SK-N-SH (cell line): ENCODE measurements at regions of chr11 and their contacts with region 1.

Region 1: GRCh38 chr11:2885676-2886081 is at the start of gene CDKN1C:
- DNase-seq: peak; percentile 98
- H3K4me3 ChIP-seq: peak within 1 kb of the TSS; percentile 58 to 65
- H3K27ac ChIP-seq: peak within 1 kb of the TSS in 1 of 2 experiments; percentile 83; a peak in 1 of 4 replicates
- H3K4me1 ChIP-seq: peaks cover 3 to 36% of the 10 kb centered on the region in 2 experiments; a peak in 1 of 4 replicates
- H3K27me3 ChIP-seq: no peaks in the 10 kb centered on the region
- CTCF ChIP-seq: no peak
- EP300 ChIP-seq: no peak
- RAD21 ChIP-seq: no peak
- polyA plus RNA-seq, gene CDKN1C: 1.1 and 1.6 TPM in 2 replicates

Region 2: DNA sequence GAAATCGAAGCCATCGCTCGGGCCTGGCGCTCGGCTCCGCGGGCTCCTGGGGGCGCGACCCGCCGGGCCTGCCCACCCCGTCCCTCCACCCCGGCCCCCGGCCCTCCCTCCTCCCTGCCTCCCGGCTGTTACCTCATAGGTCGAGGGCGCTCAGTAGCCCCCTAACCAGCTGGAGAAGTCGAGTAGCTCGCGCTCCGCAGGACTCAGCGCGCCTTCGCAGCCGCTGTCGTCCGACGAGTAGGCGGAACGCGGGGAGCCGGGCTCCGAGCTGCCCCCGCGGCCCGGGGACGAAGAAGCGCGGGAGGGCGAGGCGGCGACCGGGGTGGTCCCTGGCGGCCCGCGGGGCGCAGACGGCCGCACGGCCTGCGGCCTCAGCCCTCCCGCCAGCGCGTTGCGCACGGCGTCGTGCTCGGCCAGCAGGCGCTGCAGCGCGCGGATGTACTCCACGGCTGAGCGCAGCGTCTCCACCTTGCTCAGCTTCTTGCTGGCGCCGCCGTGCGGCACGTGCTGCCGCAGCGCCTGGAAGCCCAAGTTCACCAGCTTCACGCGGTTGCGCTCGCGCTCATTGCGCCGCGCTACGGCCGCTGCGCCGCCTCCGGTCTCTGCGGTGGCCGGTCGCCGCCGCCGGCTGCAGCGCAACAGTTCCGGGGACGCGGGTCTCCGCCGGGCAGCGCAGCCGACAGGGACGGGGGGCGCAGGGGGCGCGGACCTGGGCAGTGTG is 615.9 kb before region 1 on chr11:
- CTCF ChIA-PET with region 1: no interaction called
- POLR2A ChIA-PET with region 1: no interaction called
- DNase-seq: peak; percentile 82
- H3K4me3 ChIP-seq: no peak overlapping the region
- H3K27ac ChIP-seq: no peak overlapping the region
- H3K4me1 ChIP-seq: no peaks in the 10 kb centered on the region
- H3K27me3 ChIP-seq: peaks cover 29% of the 10 kb centered on the region
- CTCF ChIP-seq: no peak
- EP300 ChIP-seq: no peak
- RAD21 ChIP-seq: peak; percentile 13; the same call in 1 of the 2 replicates

Region 3: DNA sequence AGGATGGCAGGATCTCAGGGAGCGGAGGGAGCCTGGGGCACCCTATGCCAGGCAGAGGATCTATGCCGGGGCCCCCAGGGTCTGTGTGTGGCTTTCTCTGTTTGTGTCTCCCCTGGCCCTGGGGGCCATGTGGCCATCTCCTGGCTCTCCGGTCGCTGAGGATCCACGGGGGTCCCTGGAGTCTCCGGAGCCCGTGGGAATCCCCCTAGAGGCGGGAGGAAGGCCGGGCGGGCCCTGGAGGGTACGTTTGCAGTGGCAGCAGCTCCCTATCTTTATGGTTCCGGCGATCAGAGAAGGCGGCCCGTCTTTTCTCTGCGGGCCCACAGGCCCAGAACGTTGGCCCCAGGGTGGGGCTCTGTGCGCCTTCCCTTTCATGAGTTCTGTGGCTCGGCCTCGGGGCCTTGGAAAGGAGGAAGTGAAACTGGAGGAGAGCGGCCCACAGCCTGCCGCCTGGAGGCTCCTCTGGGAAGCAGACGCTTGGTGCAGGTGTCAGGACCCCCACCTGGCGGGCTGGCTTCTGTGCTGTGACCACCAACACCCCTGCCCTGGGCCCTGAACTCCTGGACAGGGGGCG is 358.8 kb before region 1 on chr11:
- CTCF ChIA-PET with region 1: interaction called, 1,016 read pairs
- POLR2A ChIA-PET with region 1: interaction called, 14 read pairs
- DNase-seq: no peak
- H3K4me3 ChIP-seq: no peak overlapping the region
- H3K27ac ChIP-seq: no peak overlapping the region
- H3K4me1 ChIP-seq: peaks cover 0 to 5% of the 10 kb centered on the region in 2 experiments; a peak in 1 of 4 replicates
- H3K27me3 ChIP-seq: no peaks in the 10 kb centered on the region
- CTCF ChIP-seq: no peak
- EP300 ChIP-seq: no peak
- RAD21 ChIP-seq: no peak

Region 4: DNA sequence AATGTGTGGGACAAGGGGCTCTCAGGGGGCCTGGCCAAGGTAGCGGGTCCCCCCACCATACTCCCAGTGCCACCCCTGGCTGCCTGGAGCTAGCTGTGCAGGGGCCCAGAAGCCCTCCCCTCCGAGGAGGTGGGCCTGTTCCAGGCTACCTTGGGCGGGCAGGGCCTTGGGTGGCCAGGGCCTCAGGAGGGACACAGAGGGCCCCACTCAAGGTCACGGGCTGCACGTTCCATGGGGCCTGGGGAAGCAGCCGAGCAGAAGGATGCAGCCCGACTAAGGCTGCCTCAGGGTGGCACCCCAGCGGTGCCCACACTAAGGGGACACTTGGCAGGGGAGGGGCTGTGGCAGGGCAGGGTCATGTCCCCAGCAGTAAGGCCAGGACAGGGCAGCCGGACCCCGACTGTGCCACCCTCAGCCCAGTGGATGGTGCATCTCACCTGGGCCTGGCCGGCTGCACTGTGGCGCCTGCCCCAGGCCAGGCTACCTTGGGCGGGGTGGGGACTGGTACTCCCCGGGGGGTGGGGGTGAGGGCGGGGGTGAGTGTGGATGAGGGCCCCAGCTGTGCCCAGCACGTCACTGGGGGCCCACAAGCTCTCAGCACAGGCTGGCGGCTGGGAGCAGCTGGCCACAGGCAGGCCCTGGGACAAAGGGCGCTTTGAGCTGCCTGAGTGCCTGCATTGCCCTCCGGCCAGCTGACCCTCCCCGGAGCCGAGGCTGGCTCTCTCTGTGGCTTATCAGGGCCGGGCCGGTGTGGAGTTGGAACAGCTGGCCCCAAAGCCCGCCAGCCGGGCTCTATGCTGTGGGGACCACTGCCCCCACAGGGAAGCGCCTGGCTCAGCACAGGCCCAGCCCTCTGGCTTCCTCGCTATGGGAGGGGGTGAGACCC is 323.7 kb before region 1 on chr11:
- CTCF ChIA-PET with region 1: interaction called, 11 read pairs
- POLR2A ChIA-PET with region 1: no interaction called
- DNase-seq: no peak
- H3K4me3 ChIP-seq: no peak overlapping the region
- H3K27ac ChIP-seq: no peak overlapping the region
- H3K4me1 ChIP-seq: no peaks in the 10 kb centered on the region; a peak in 1 of 4 replicates
- H3K27me3 ChIP-seq: no peaks in the 10 kb centered on the region
- CTCF ChIP-seq: no peak
- EP300 ChIP-seq: no peak
- RAD21 ChIP-seq: no peak

Region 5: GRCh38 chr11:2684581-2684980 is 201.1 kb before region 1 on chr11:
- CTCF ChIA-PET with region 1: interaction called, 11 read pairs
- POLR2A ChIA-PET with region 1: no interaction called
- DNase-seq: no peak
- H3K4me3 ChIP-seq: no peak overlapping the region
- H3K27ac ChIP-seq: no peak overlapping the region
- H3K4me1 ChIP-seq: peaks cover 0 to 28% of the 10 kb centered on the region in 2 experiments; a peak in 1 of 4 replicates
- H3K27me3 ChIP-seq: no peaks in the 10 kb centered on the region
- CTCF ChIP-seq: no peak
- EP300 ChIP-seq: no peak
- RAD21 ChIP-seq: no peak

Region 6: GRCh38 chr11:2699531-2700414 is 185.9 kb before region 1 on chr11 and contains the start of gene KCNQ1OT1:
- CTCF ChIA-PET with region 1: interaction called, 10 read pairs
- POLR2A ChIA-PET with region 1: interaction called, 5 read pairs
- DNase-seq: peak; percentile 94
- H3K4me3 ChIP-seq: peak within 1 kb of the TSS; percentile 67 to 70
- H3K27ac ChIP-seq: peak within 1 kb of the TSS; percentile 60 to 87
- H3K4me1 ChIP-seq: peaks cover 0 to 29% of the 10 kb centered on the region in 2 experiments; a peak in 1 of 4 replicates
- H3K27me3 ChIP-seq: no peaks in the 10 kb centered on the region
- CTCF ChIP-seq: 0 out of 2 replicates have a peak, but pooled peaks have one; percentile 9
- EP300 ChIP-seq: no peak
- RAD21 ChIP-seq: no peak
- polyA plus RNA-seq, gene KCNQ1OT1: 0.03 and 0.05 TPM in 2 replicates

Region 7: GRCh38 chr11:2725368-2726300 is 160.0 kb before region 1 on chr11:
- CTCF ChIA-PET with region 1: interaction called, 10 read pairs
- POLR2A ChIA-PET with region 1: interaction called, 3 read pairs
- DNase-seq: no peak
- H3K4me3 ChIP-seq: no peak overlapping the region
- H3K27ac ChIP-seq: no peak overlapping the region
- H3K4me1 ChIP-seq: peaks cover 0 to 34% of the 10 kb centered on the region in 2 experiments; a peak in 1 of 4 replicates
- H3K27me3 ChIP-seq: no peaks in the 10 kb centered on the region
- CTCF ChIP-seq: no peak
- EP300 ChIP-seq: no peak
- RAD21 ChIP-seq: no peak

Region 8: GRCh38 chr11:2901854-2902783 is 16.4 kb after region 1 on chr11:
- CTCF ChIA-PET with region 1: interaction called, 66 read pairs
- POLR2A ChIA-PET with region 1: interaction called, 3 read pairs
- DNase-seq: peak; percentile 98
- H3K4me3 ChIP-seq: peak overlapping the region; percentile 78 to 80
- H3K27ac ChIP-seq: peak overlapping the region; percentile 35 to 58; a peak in 2 of 4 replicates
- H3K4me1 ChIP-seq: peaks cover 17 to 21% of the 10 kb centered on the region in 2 experiments; a peak in 3 of 4 replicates
- H3K27me3 ChIP-seq: no peaks in the 10 kb centered on the region
- CTCF ChIP-seq: no peak
- EP300 ChIP-seq: no peak; a peak in 1 of 4 replicates
- RAD21 ChIP-seq: no peak

Region 9: GRCh38 chr11:2992234-2992996 is 106.7 kb after region 1 on chr11 and contains the start of gene NAP1L4:
- CTCF ChIA-PET with region 1: no interaction called
- POLR2A ChIA-PET with region 1: no interaction called
- DNase-seq: peak; percentile 99
- H3K4me3 ChIP-seq: peak within 1 kb of the TSS; percentile 89 to 97
- H3K27ac ChIP-seq: peak within 1 kb of the TSS; percentile 81 to 82
- H3K4me1 ChIP-seq: peaks cover 9 to 26% of the 10 kb centered on the region in 2 experiments; a peak in 3 of 4 replicates
- H3K27me3 ChIP-seq: no peaks in the 10 kb centered on the region
- CTCF ChIP-seq: no peak
- EP300 ChIP-seq: no peak
- RAD21 ChIP-seq: no peak
- polyA plus RNA-seq, gene NAP1L4: 82.5 and 104 TPM in 2 replicates